Activated CD4-positive, alpha-beta memory T cell treated with anti-CD3 and anti-CD28 coated beads, Interleukin-2, amount 10 ng/mL, durations not matched to agents 7 days and 5 days (primary cell): ENCODE measurements at regions of chr5 and their contacts with region 1.

Region 1: DNA sequence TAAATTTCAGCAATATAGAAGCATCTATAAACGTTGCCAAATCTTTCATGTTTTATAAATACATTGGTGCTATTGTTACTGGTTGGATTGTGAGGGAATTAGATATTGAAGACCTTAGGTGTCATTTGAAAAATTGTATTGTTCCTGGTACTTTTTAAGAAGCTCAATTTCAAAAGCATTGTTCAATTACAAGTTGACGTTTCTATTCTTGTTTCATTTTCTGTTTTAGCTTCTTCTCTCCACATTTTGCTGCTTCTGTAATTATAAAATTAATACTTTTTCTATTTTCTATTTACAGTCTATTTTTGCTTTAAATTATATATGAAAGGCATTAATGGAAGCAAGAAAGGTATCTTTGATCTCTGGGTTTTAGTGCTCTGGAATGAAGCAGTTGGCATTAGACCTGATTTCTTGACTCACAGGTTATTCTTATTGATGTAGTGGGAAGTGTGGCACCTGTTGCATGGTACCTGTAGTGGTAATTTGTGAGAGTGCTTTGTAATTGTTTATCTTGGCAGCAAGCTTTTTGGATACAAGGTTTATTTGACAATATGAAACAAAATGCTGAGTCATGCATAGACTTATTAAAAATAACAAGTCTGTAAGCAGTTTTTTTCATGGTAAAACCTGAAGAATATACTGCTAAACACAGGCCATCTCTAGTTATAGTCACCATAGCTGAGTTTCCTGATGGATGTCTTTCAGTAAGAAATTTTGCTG is 13.2 kb downstream of the MACIR start:
- DNase-seq: no peak
- H3K4me3 Mint-ChIP-seq: peak overlapping the region; percentile 39
- H3K27ac Mint-ChIP-seq: peak overlapping the region; percentile 18
- H3K4me1 Mint-ChIP-seq: peaks cover 27% of the 10 kb centered on the region
- H3K27me3 Mint-ChIP-seq: no peaks in the 10 kb centered on the region

Region 2: GRCh38 chr5:103208460-103208859 is 63.3 kb before region 1 on chr5:
- CTCF ChIA-PET with region 1: no interaction called
- POLR2A ChIA-PET with region 1: no interaction called
- DNase-seq: no peak
- H3K4me3 Mint-ChIP-seq: no peak overlapping the region
- H3K27ac Mint-ChIP-seq: peak overlapping the region; percentile 19
- H3K4me1 Mint-ChIP-seq: peaks cover 33% of the 10 kb centered on the region
- H3K27me3 Mint-ChIP-seq: no peaks in the 10 kb centered on the region

Region 3: GRCh38 chr5:103258368-103258956 is 13.3 kb before region 1 on chr5 and contains the start of gene MACIR:
- CTCF ChIA-PET with region 1: interaction called, 3 read pairs
- POLR2A ChIA-PET with region 1: interaction called, 13 read pairs
- DNase-seq: peak; percentile 96
- H3K4me3 Mint-ChIP-seq: peak within 1 kb of the TSS; percentile 75
- H3K27ac Mint-ChIP-seq: peak within 1 kb of the TSS; percentile 65
- H3K4me1 Mint-ChIP-seq: peaks cover 27% of the 10 kb centered on the region
- H3K27me3 Mint-ChIP-seq: peaks cover 9% of the 10 kb centered on the region
- total RNA-seq, gene MACIR: 6.3 to 7.4 TPM

Region 4: DNA sequence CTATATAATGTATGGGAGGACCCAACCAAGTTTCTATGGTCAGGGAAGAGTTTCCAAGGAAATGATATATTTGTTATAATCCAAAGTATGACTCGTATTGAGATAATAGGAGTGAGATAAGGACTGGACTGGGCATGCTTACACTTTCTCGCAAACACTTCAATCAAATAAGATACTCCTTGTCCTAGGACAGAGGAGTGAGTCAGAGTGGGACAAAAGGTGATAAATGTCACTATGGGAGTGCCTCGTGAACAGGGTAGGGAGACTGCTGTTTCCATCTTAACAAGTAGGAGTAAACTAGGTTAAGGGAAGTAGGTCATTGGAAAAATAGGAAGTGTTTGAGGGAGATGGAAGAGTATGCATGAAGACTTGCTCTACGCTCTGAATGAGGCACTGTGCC is 34.1 kb after region 1 on chr5:
- CTCF ChIA-PET with region 1: no interaction called
- POLR2A ChIA-PET with region 1: no interaction called
- DNase-seq: no peak
- H3K4me3 Mint-ChIP-seq: no peak overlapping the region
- H3K27ac Mint-ChIP-seq: no peak overlapping the region
- H3K4me1 Mint-ChIP-seq: no peaks in the 10 kb centered on the region
- H3K27me3 Mint-ChIP-seq: peaks cover 17% of the 10 kb centered on the region